ENCODE measurements at regions of chr1 and their contacts with region 1.

Region 1: GRCh38 chr1:179365320-179366092 is at the start of gene AXDND1:
- DNase-seq: peak; percentile 93 to 96 (median 94)
- H3K4me3 ChIP-seq: peak within 1 kb of the TSS; percentile 71 to 76
- H3K4me3 Mint-ChIP-seq: peak within 1 kb of the TSS; percentile 92 to 99 (median 98)
- H3K27ac ChIP-seq: peak within 1 kb of the TSS; percentile 99
- H3K27ac Mint-ChIP-seq: peak within 1 kb of the TSS; percentile 100
- H3K4me1 ChIP-seq: peaks cover 10% of the 10 kb centered on the region
- H3K4me1 Mint-ChIP-seq: peaks cover 5 to 22% (median 10%) of the 10 kb centered on the region in 4 donors
- H3K27me3 ChIP-seq: no peaks in the 10 kb centered on the region
- H3K27me3 Mint-ChIP-seq: no peaks in the 10 kb centered on the region
- total RNA-seq, gene AXDND1: 0.44 to 1.3 TPM

Region 2: GRCh38 chr1:178532392-178532791 is 833.1 kb before region 1 on chr1:
- CTCF ChIA-PET with region 1: interaction called, 3 read pairs
- POLR2A ChIA-PET with region 1: no interaction called
- intact Hi-C with region 1: loop called (anchors 1 kb)
- DNase-seq: peak; percentile 56 to 64 (median 60)
- H3K4me3 ChIP-seq: no peak overlapping the region
- H3K4me3 Mint-ChIP-seq: peak overlapping the region in 1 of 8 donors; percentile 16
- H3K27ac ChIP-seq: no peak overlapping the region
- H3K27ac Mint-ChIP-seq: peak overlapping the region in 3 of 7 donors; percentile 18 to 53 (median 43)
- H3K4me1 ChIP-seq: peaks cover 6% of the 10 kb centered on the region
- H3K4me1 Mint-ChIP-seq: peaks cover 0 to 6% (median 3%) of the 10 kb centered on the region in 4 donors
- H3K27me3 ChIP-seq: no peaks in the 10 kb centered on the region
- H3K27me3 Mint-ChIP-seq: peaks cover 0 to 1% of the 10 kb centered on the region in 2 donors

Region 3: GRCh38 chr1:178768423-178768822 is 597.1 kb before region 1 on chr1:
- CTCF ChIA-PET with region 1: no interaction called
- POLR2A ChIA-PET with region 1: no interaction called
- intact Hi-C with region 1: loop called (anchors 1 kb)
- DNase-seq: peak in 4 of 5 donors; percentile 30 to 40 (median 33)
- H3K4me3 ChIP-seq: no peak overlapping the region
- H3K4me3 Mint-ChIP-seq: no peak overlapping the region
- H3K27ac ChIP-seq: no peak overlapping the region
- H3K27ac Mint-ChIP-seq: no peak overlapping the region
- H3K4me1 ChIP-seq: no peaks in the 10 kb centered on the region
- H3K4me1 Mint-ChIP-seq: peaks cover 0 to 2% (median 0%) of the 10 kb centered on the region in 4 donors
- H3K27me3 ChIP-seq: no peaks in the 10 kb centered on the region
- H3K27me3 Mint-ChIP-seq: no peaks in the 10 kb centered on the region

Region 4: GRCh38 chr1:178973666-178974101 is 391.8 kb before region 1 on chr1:
- CTCF ChIA-PET with region 1: no interaction called
- POLR2A ChIA-PET with region 1: no interaction called
- intact Hi-C with region 1: no loop called
- DNase-seq: no peak
- H3K4me3 ChIP-seq: no peak overlapping the region
- H3K4me3 Mint-ChIP-seq: peak overlapping the region in 1 of 8 donors; percentile 3
- H3K27ac ChIP-seq: no peak overlapping the region
- H3K27ac Mint-ChIP-seq: no peak overlapping the region
- H3K4me1 ChIP-seq: no peaks in the 10 kb centered on the region
- H3K4me1 Mint-ChIP-seq: peaks cover 0 to 9% (median 2%) of the 10 kb centered on the region in 4 donors
- H3K27me3 ChIP-seq: no peaks in the 10 kb centered on the region
- H3K27me3 Mint-ChIP-seq: peaks cover 1 to 5% of the 10 kb centered on the region in 2 donors

Region 5: GRCh38 chr1:179081687-179082332 is 283.7 kb before region 1 on chr1 and contains the start of gene TOR3A:
- CTCF ChIA-PET with region 1: interaction called, 97 read pairs
- POLR2A ChIA-PET with region 1: interaction called, 27 read pairs
- intact Hi-C with region 1: loop called (anchors 1 kb)
- DNase-seq: peak; percentile 72 to 80 (median 75)
- H3K4me3 ChIP-seq: peak within 1 kb of the TSS; percentile 57 to 74
- H3K4me3 Mint-ChIP-seq: peak within 1 kb of the TSS; percentile 93 to 98 (median 96)
- H3K27ac ChIP-seq: peak within 1 kb of the TSS; percentile 81
- H3K27ac Mint-ChIP-seq: peak within 1 kb of the TSS; percentile 97 to 98 (median 97)
- H3K4me1 ChIP-seq: peaks cover 23% of the 10 kb centered on the region
- H3K4me1 Mint-ChIP-seq: peaks cover 15 to 37% (median 26%) of the 10 kb centered on the region in 4 donors
- H3K27me3 ChIP-seq: no peaks in the 10 kb centered on the region
- H3K27me3 Mint-ChIP-seq: no peaks in the 10 kb centered on the region
- total RNA-seq, gene TOR3A: 25.4 to 27.3 TPM

Region 6: DNA sequence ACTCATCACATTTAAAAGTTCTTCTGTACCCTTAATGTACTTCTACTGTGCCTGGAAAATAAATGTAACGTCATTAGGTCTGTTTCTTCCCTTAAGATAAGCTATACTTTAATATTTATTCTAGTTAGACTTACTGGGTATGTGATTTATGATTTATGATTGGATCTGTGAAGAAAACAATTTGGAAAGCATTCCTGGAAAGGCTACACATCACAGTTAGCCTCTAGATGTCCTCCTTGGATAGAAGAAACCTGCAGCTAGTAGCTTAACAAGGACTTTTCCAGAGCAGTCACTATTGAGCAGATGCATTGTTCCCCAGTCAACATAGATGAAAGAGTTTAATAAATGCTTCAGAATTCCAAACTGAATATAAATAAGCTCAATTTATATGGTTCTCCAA is 113.8 kb before region 1 on chr1:
- CTCF ChIA-PET with region 1: interaction called, 80 read pairs
- POLR2A ChIA-PET with region 1: interaction called, 3 read pairs
- intact Hi-C with region 1: loop called (anchors 1 kb)
- DNase-seq: peak in 4 of 5 donors; percentile 5 to 16 (median 11)
- H3K4me3 ChIP-seq: no peak overlapping the region
- H3K4me3 Mint-ChIP-seq: no peak overlapping the region
- H3K27ac ChIP-seq: no peak overlapping the region
- H3K27ac Mint-ChIP-seq: no peak overlapping the region
- H3K4me1 ChIP-seq: no peaks in the 10 kb centered on the region
- H3K4me1 Mint-ChIP-seq: no peaks in the 10 kb centered on the region
- H3K27me3 ChIP-seq: peaks cover 2% of the 10 kb centered on the region
- H3K27me3 Mint-ChIP-seq: no peaks in the 10 kb centered on the region

Region 7: DNA sequence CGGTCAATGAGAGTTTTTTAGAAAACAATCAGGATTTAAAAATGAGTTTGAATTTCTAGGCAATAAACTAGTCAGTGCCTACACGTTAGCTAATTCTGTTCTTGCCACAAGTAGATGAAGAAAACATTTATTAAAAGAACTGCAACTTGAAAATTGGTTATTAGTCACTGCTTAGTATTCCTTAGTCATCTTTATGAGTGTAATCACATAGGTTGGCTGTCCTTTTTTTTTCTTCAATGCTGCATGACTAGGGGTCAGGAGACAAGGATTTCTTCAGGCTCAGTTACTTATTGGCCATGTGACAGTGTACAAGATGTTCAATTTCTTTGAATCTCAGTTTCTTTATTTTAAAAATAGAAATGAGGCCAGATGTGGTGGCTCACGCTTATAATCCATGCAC is 54.8 kb before region 1 on chr1:
- CTCF ChIA-PET with region 1: no interaction called
- POLR2A ChIA-PET with region 1: no interaction called
- intact Hi-C with region 1: no loop called
- DNase-seq: no peak
- H3K4me3 ChIP-seq: no peak overlapping the region
- H3K4me3 Mint-ChIP-seq: no peak overlapping the region
- H3K27ac ChIP-seq: no peak overlapping the region
- H3K27ac Mint-ChIP-seq: no peak overlapping the region
- H3K4me1 ChIP-seq: peaks cover 6% of the 10 kb centered on the region
- H3K4me1 Mint-ChIP-seq: peaks cover 33 to 48% (median 39%) of the 10 kb centered on the region in 4 donors
- H3K27me3 ChIP-seq: no peaks in the 10 kb centered on the region
- H3K27me3 Mint-ChIP-seq: no peaks in the 10 kb centered on the region

Region 8: DNA sequence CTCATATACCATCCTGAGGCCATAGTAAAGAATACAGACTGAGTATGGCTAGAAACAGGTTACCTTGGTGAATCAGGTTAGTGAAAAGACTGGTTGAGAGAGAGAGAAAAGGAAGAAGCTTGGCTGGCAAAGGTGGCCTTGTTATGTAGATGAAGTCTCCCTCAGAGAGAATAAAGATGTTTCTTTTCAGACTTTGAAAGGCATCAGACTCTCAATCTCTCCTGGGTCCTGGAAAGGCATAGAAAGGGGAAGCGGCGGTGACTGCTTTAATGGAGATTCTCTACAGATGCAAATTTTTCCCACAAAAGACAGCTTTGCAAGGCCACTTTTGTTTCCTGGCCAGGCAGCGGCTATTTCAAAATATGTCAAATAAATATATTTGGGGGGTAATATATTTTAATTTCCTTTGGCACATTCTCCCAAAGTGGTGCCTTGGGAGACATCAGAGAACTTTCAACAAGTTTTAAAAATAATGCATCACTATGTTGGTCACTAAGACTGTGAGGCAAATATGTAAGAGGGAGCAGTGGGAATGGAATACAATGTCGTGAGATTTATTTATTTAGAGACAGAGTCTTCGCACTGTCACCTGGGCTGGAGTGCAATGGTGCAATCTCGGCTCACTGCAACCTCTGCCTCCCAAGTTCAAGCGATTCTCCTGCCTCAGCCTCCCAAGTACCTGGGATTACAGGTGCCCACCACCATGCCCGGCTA is 164.1 kb after region 1 on chr1:
- CTCF ChIA-PET with region 1: no interaction called
- POLR2A ChIA-PET with region 1: no interaction called
- intact Hi-C with region 1: no loop called
- DNase-seq: no peak
- H3K4me3 ChIP-seq: no peak overlapping the region
- H3K4me3 Mint-ChIP-seq: no peak overlapping the region
- H3K27ac ChIP-seq: no peak overlapping the region
- H3K27ac Mint-ChIP-seq: no peak overlapping the region
- H3K4me1 ChIP-seq: no peaks in the 10 kb centered on the region
- H3K4me1 Mint-ChIP-seq: no peaks in the 10 kb centered on the region
- H3K27me3 ChIP-seq: no peaks in the 10 kb centered on the region
- H3K27me3 Mint-ChIP-seq: peaks cover 3 to 14% of the 10 kb centered on the region in 2 donors

Region 9: GRCh38 chr1:180502360-180503273 is 1137.1 kb after region 1 on chr1 and contains the start of gene ACBD6:
- CTCF ChIA-PET with region 1: no interaction called
- POLR2A ChIA-PET with region 1: no interaction called
- intact Hi-C with region 1: loop called (anchors 5 kb)
- DNase-seq: peak; percentile 86 to 91 (median 88)
- H3K4me3 ChIP-seq: peak within 1 kb of the TSS; percentile 89 to 95
- H3K4me3 Mint-ChIP-seq: peak within 1 kb of the TSS; percentile 96 to 99 (median 98)
- H3K27ac ChIP-seq: peak within 1 kb of the TSS; percentile 71
- H3K27ac Mint-ChIP-seq: peak within 1 kb of the TSS; percentile 92 to 99 (median 97)
- H3K4me1 ChIP-seq: peaks cover 42% of the 10 kb centered on the region
- H3K4me1 Mint-ChIP-seq: peaks cover 23 to 42% (median 31%) of the 10 kb centered on the region in 4 donors
- H3K27me3 ChIP-seq: no peaks in the 10 kb centered on the region
- H3K27me3 Mint-ChIP-seq: no peaks in the 10 kb centered on the region
- total RNA-seq, gene ACBD6: 55.1 to 64.2 TPM